A673 (cell line): ENCODE measurements at regions of chr11 and their contacts with region 1.

Region 1: DNA sequence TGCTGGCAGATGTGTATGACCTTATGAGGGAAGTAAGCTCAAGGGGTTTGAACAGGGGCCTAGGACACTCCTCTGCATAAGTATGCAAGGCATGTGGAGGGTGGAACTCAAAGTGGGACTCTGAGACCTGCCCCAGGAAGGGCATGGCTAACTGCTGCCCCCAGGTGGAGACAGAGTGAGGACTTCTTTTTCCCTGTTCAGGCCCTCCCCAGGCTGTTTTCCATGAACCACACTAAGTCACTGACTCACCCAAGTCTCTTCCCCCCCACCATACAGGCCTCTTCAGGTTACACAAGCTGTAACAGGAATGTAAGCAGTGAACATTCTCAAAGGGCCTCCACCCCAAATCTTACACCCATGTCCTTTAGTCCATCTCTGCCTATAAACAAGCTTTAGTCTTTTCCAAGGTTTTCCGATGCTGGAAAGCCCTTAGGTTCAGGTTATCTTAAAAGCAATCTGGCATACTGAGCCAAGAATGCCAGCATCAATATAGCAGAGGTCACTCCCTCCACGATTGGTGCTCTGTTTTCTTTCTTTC is 13.1 kb downstream of the EEF1G start:
- DNase-seq: peak; percentile 96
- H3K4me3 ChIP-seq: no peak overlapping the region
- H3K27ac ChIP-seq: peak overlapping the region; percentile 24
- H3K4me1 ChIP-seq: peaks cover 48% of the 10 kb centered on the region
- H3K27me3 ChIP-seq: no peaks in the 10 kb centered on the region
- CTCF ChIP-seq: peak; percentile 84

Region 2: GRCh38 chr11:62421996-62422395 is 138.6 kb before region 1 on chr11:
- CTCF ChIA-PET with region 1: interaction called, 41 read pairs
- POLR2A ChIA-PET with region 1: interaction called, 5 read pairs
- intact Hi-C with region 1: loop called (anchors 5 kb)
- DNase-seq: no peak
- H3K4me3 ChIP-seq: no peak overlapping the region
- H3K27ac ChIP-seq: no peak overlapping the region
- H3K4me1 ChIP-seq: peaks cover 19% of the 10 kb centered on the region
- H3K27me3 ChIP-seq: no peaks in the 10 kb centered on the region
- CTCF ChIP-seq: no peak

Region 3: DNA sequence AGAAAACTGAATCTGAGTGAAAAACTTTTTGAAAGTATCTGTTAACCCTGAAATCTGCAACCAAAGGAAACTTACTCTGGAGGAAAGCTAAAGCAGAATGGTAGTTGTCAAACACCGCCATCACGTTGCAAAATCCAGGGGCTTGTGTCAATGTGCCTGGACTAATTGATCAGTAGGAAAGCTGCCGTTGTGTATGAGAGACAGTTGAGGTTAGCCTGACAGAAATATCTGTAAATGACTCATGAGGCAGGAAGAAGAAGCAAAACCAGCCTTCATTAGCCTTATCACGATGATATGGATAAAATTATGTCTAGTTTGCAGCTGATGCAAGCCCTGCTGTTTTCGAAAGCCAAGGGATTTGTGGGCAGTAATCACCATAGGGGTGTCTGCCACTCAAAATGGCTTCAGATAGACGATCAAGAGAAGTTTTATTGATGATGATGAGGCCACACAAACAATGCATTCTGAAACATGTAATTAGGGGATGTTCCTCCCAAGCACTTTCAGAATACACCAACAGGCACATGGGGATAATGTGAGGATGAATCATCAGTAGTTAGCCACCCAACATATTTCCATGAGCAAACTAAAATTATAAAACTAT is 132.9 kb before region 1 on chr11:
- CTCF ChIA-PET with region 1: interaction called, 41 read pairs
- POLR2A ChIA-PET with region 1: interaction called, 5 read pairs
- intact Hi-C with region 1: loop called (anchors 5 kb)
- DNase-seq: no peak
- H3K4me3 ChIP-seq: no peak overlapping the region
- H3K27ac ChIP-seq: no peak overlapping the region
- H3K4me1 ChIP-seq: no peaks in the 10 kb centered on the region
- H3K27me3 ChIP-seq: no peaks in the 10 kb centered on the region
- CTCF ChIP-seq: no peak

Region 4: DNA sequence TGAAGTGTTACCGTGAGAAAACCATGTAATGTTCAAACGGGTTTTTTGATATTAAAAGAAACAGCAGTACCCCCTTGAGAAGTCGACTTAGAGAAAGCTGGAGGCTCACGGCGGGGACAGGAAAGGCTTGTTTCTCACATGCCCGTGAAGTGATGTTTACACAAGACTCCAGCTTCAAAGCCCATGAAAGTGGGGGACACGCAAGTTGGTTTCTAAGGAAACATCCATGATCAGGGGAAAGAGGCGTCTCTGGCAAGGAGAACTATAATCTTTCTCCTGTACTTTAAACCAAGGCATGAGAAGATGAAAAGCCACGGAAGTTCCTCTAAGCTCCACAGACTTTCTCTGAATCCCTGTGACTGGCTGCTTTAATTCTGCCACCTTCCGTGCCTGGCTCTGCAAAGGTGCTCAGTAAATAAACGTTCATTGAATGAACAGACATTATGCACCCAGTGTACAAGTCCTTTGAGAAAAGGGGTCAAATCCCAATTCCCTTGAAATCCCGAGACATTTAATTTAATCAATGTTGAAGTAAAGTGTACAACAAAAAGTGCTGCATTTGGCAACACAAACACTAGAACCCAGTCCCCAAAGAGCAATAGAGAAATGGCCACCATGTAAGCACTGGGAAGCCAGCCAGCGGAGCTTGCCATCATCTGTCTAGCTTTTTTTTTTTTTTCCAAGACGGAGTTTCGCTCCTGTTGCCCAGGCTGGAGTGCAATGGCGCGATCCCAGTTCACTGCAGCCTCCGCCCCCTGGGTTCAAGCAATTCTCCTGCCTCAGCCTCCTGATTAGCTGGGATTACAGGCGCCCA is 72.7 kb before region 1 on chr11:
- CTCF ChIA-PET with region 1: interaction called, 14 read pairs
- POLR2A ChIA-PET with region 1: interaction called, 10 read pairs
- intact Hi-C with region 1: no loop called
- DNase-seq: no peak
- H3K4me3 ChIP-seq: no peak overlapping the region
- H3K27ac ChIP-seq: no peak overlapping the region
- H3K4me1 ChIP-seq: no peaks in the 10 kb centered on the region
- H3K27me3 ChIP-seq: no peaks in the 10 kb centered on the region
- CTCF ChIP-seq: no peak

Region 5: DNA sequence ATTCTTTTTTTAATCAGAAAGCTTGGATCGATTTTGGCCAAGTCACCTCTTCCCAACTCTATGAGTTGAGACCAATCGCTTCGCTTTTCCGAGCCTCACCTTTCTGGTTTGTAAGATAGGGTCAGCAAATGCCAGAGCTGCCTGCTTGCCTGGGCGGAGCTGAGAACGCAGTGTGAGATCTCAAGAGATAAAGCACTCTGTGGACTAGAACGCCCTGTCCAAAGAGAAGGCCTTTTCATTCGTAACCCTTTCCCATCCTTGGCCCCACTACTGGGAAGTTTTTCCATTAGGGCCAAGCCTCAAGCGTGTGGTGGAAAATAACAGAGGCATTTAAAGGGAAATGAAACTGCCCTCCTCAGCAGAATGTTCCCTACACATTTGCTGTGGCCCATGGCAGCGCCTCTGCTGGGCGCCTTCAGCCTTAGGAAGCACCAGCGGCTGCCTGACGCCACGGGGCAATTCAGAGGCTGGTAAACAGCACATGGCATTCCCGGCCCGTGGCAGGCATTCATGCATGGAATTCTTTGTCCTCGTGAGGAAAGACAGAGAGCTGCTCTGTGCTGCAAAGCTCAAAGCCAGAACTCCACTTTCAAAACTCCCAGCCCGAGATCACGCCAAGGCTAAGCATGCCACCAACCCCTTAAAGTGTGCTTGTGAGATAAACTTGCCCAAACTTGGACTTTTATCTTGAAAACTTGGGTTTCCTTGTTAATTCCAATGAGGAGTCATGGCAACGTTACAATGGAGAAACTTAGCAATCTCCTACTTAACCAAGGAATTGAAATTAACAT is 52.2 kb before region 1 on chr11:
- CTCF ChIA-PET with region 1: no interaction called
- POLR2A ChIA-PET with region 1: no interaction called
- intact Hi-C with region 1: no loop called
- DNase-seq: peak; percentile 65
- H3K4me3 ChIP-seq: no peak overlapping the region
- H3K27ac ChIP-seq: no peak overlapping the region
- H3K4me1 ChIP-seq: peaks cover 4% of the 10 kb centered on the region
- H3K27me3 ChIP-seq: no peaks in the 10 kb centered on the region
- CTCF ChIP-seq: peak; percentile 48